Cardiac septum (tissue), 1 donor: ENCODE measurements at regions of chr16 and their contacts with region 1.

Region 1: GRCh38 chr16:9854675-9855074 is 327.6 kb downstream of the GRIN2A start:
- DNase-seq: no peak

Region 2: GRCh38 chr16:9797306-9797705 is 57.4 kb before region 1 on chr16:
- intact Hi-C with region 1: loop called (anchors 5 kb)
- DNase-seq: no peak

Region 3: GRCh38 chr16:9929313-9929712 is 74.6 kb after region 1 on chr16:
- intact Hi-C with region 1: no loop called
- DNase-seq: no peak

Region 4: GRCh38 chr16:10080036-10080772 is 225.5 kb after region 1 on chr16:
- intact Hi-C with region 1: loop called (anchors 10 kb)
- DNase-seq: no peak